Activated naive CD8-positive, alpha-beta T cell treated with anti-CD3 and anti-CD28 coated beads, Interleukin-2, amount 10 ng/mL, durations not matched to agents 7 days and 5 days (primary cell): ENCODE measurements at regions of chr18 and their contacts with region 1.

Region 1: DNA sequence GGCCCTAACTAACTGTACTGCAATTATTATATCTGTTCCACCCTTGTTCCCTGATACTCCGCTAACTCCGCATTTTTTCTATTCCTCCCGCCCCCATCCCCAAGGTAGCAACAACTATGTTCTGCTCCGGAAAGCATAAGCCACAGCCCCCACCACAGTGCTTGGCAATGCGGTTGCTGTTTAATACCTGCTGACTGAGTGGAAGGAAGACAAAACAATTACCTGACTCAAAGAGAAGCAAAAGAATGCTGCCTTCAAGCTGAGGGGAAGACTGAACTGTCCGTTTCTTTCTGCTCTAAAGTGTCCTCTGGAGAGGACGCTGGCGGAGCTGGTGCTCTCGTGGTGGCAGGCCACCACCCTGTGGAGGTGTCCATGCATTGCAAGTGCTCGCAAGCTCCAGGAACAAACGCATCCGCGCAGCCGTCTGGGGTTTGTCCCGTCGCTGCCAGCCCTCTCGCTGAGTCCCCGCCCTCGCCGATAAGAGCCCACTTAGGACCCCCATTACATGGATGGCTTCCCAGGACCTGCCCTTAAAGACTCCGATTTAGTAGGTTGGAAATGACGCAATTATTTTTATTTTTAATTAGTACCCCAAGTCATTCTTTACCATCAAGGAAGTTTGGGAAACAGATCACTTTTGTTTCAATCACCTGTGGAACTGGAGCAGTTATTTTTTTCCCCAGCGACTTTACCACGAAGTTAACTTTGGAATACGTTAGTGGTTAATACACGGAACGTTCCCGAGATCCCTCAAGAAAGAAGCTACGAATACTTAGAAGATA is 1.6 kb upstream of the MYL12A start:
- DNase-seq: peak; percentile 80
- ATAC-seq: peak; percentile 44
- H3K4me3 Mint-ChIP-seq: peak overlapping the region; percentile 92
- H3K27ac Mint-ChIP-seq: peak overlapping the region; percentile 99
- H3K4me1 Mint-ChIP-seq: peaks cover 29% of the 10 kb centered on the region
- H3K27me3 Mint-ChIP-seq: no peaks in the 10 kb centered on the region

Region 2: DNA sequence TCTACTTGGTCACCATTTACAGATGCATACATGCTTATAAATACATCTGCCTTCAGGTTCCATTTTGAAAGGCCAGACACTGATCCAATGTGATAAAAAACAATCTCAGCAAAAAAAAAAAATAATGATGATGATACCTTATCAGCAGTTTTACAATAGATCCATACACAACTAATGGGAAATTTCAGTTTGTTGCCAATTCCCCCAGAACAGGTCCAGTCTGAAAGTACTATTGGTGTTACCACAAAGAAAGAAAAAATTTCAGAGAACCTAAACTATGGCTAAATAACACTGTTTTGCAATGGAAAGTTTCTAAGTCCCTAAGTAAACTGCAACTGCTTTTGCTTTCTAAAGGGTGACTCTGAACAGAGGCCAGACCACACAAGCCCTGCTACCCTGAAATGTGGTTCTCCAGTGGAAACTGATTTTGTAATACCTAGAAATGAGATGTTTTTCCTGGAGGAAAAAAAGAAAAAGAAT is 287.2 kb before region 1 on chr18:
- POLR2A ChIA-PET with region 1: interaction called, 23 read pairs
- DNase-seq: no peak
- ATAC-seq: peak; percentile 43
- H3K4me3 Mint-ChIP-seq: peak overlapping the region; percentile 83
- H3K27ac Mint-ChIP-seq: peak overlapping the region; percentile 99
- H3K4me1 Mint-ChIP-seq: peaks cover 76% of the 10 kb centered on the region
- H3K27me3 Mint-ChIP-seq: no peaks in the 10 kb centered on the region

Region 3: GRCh38 chr18:2978646-2979045 is 267.4 kb before region 1 on chr18:
- POLR2A ChIA-PET with region 1: interaction called, 19 read pairs
- DNase-seq: no peak
- ATAC-seq: no peak
- H3K4me3 Mint-ChIP-seq: peak overlapping the region; percentile 89
- H3K27ac Mint-ChIP-seq: peak overlapping the region; percentile 94
- H3K4me1 Mint-ChIP-seq: peaks cover 65% of the 10 kb centered on the region
- H3K27me3 Mint-ChIP-seq: no peaks in the 10 kb centered on the region

Region 4: GRCh38 chr18:2994603-2995432 is 251.2 kb before region 1 on chr18:
- POLR2A ChIA-PET with region 1: interaction called, 29 read pairs
- DNase-seq: peak; percentile 73
- ATAC-seq: peak; percentile 81
- H3K4me3 Mint-ChIP-seq: peak overlapping the region; percentile 52
- H3K27ac Mint-ChIP-seq: peak overlapping the region; percentile 75
- H3K4me1 Mint-ChIP-seq: peaks cover 57% of the 10 kb centered on the region
- H3K27me3 Mint-ChIP-seq: no peaks in the 10 kb centered on the region

Region 5: GRCh38 chr18:3062798-3063680 is 183.0 kb before region 1 on chr18:
- POLR2A ChIA-PET with region 1: interaction called, 50 read pairs
- DNase-seq: peak; percentile 76
- ATAC-seq: peak; percentile 57
- H3K4me3 Mint-ChIP-seq: peak overlapping the region; percentile 68
- H3K27ac Mint-ChIP-seq: peak overlapping the region; percentile 87
- H3K4me1 Mint-ChIP-seq: peaks cover 57% of the 10 kb centered on the region
- H3K27me3 Mint-ChIP-seq: no peaks in the 10 kb centered on the region

Region 6: DNA sequence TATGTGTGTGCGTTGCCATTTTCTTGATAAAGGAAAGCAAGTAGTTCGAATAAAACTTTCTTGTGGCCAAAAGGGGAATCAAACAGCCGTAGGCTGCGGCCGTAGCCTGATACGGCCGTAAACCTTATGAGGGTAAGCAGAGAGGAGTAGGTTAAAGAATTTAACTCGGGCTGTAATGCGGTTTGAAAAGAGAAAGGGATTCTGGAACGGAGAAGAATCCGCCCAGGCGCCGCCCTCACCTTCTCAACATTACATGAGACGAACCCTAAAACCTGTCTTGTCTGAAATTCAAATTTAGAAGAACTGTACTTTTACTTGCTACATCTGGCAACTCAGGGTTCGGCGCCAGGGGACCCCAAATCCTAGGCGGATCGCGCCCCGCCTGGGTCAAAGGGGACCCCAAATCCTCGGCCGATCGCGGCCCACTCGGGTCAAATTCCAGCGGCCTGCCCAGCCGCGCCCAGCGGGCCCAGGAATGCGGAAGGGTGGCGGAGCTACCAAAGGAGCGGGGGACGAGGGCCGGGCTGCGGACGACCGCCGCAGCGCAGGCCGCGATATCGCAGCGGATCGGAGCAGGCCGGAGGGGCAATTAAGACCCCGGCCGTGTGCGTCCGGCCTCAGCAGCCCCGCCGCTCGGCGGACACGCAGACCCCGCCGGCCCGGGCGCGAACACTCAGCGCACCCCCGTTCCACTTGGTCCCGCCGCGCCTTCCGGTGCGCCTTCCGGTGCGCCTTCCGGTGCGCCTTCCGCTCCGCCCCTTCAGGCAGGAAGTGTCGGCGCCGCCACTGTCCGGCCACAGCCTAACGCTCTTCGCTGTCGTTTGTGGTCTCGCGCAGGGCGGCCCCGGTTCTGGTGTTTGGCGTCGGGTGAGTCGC is 15.6 kb after region 1 on chr18 and contains the start of gene MYL12B:
- POLR2A ChIA-PET with region 1: interaction called, 159 read pairs
- DNase-seq: peak; percentile 87
- ATAC-seq: peak; percentile 69
- H3K4me3 Mint-ChIP-seq: peak within 1 kb of the TSS; percentile 99
- H3K27ac Mint-ChIP-seq: peak within 1 kb of the TSS; percentile 100
- H3K4me1 Mint-ChIP-seq: peaks cover 55% of the 10 kb centered on the region
- H3K27me3 Mint-ChIP-seq: no peaks in the 10 kb centered on the region
- total RNA-seq, gene MYL12B: 354 to 358 TPM

Region 7: DNA sequence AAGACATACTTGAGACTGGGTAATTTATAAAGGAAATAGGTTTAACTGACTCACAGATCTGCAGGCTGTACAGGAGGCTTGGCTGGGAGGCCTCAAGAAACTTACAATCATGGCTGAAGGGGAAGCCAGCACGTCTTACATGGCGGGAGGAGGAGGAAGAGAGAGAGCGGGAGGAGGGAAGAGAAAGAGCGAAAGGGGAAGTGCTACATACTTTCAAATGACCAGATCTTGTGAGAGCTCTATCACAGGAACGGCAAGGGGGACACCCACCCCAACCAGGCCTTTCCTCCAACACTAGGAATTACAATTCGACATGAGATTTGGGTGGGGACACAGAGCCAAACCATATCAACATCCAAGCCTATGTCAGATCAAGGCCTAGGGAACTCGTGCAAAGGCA is 40.1 kb after region 1 on chr18:
- POLR2A ChIA-PET with region 1: no interaction called
- DNase-seq: no peak
- ATAC-seq: no peak
- H3K4me3 Mint-ChIP-seq: no peak overlapping the region
- H3K27ac Mint-ChIP-seq: no peak overlapping the region
- H3K4me1 Mint-ChIP-seq: no peaks in the 10 kb centered on the region
- H3K27me3 Mint-ChIP-seq: no peaks in the 10 kb centered on the region